Vagina (tissue), 2 donors: ENCODE measurements at regions of chr1 and their contacts with region 1.

Region 1: GRCh38 chr1:20640183-20640597 is 6.9 kb downstream of the PINK1 start:
- DNase-seq: no peak
- H3K4me3 ChIP-seq: no peak overlapping the region
- H3K27ac ChIP-seq: no peak overlapping the region
- H3K4me1 ChIP-seq: peaks cover 8% of the 10 kb centered on the region
- H3K27me3 ChIP-seq: no peaks in the 10 kb centered on the region
- CTCF ChIP-seq: peak; percentile 15 to 72 (median 59)
- POLR2A ChIP-seq: no peak

Region 2: GRCh38 chr1:20493839-20494608 is 146.2 kb before region 1 on chr1:
- intact Hi-C with region 1: no loop called
- DNase-seq: peak in 1 of 2 donors; percentile 95
- H3K4me3 ChIP-seq: peak overlapping the region in 1 of 2 donors; percentile 8
- H3K27ac ChIP-seq: no peak overlapping the region
- H3K4me1 ChIP-seq: no peaks in the 10 kb centered on the region
- H3K27me3 ChIP-seq: no peaks in the 10 kb centered on the region
- CTCF ChIP-seq: peak; percentile 89 to 99 (median 98)
- POLR2A ChIP-seq: no peak

Region 3: GRCh38 chr1:20521960-20522861 is 118.0 kb before region 1 on chr1:
- intact Hi-C with region 1: loop called (anchors 5 kb)
- DNase-seq: no peak
- H3K4me3 ChIP-seq: no peak overlapping the region
- H3K27ac ChIP-seq: no peak overlapping the region
- H3K4me1 ChIP-seq: no peaks in the 10 kb centered on the region
- H3K27me3 ChIP-seq: no peaks in the 10 kb centered on the region
- CTCF ChIP-seq: peak; percentile 61 to 91 (median 78)
- POLR2A ChIP-seq: no peak